Heart left ventricle (tissue), 16 donors: ENCODE measurements at regions of chr7 and their contacts with region 1.

Region 1: GRCh38 chr7:139995017-139995931 is 67.5 kb downstream of the PARP12 start:
- DNase-seq: peak in 4 of 5 donors; percentile 46 to 62 (median 54)
- ATAC-seq: peak; percentile 84 to 90 (median 86)
- H3K4me3 ChIP-seq: no peak overlapping the region
- H3K27ac ChIP-seq: no peak overlapping the region
- H3K4me1 ChIP-seq: peaks cover 0 to 9% (median 0%) of the 10 kb centered on the region in 12 donors
- H3K27me3 ChIP-seq: no peaks in the 10 kb centered on the region
- CTCF ChIP-seq: no peak
- POLR2A ChIP-seq: no peak

Region 2: GRCh38 chr7:139811066-139811465 is 184.2 kb before region 1 on chr7:
- intact Hi-C with region 1: loop called in 1 of 10 experiments (anchors 10 kb)
- DNase-seq: no peak
- ATAC-seq: no peak
- H3K4me3 ChIP-seq: no peak overlapping the region
- H3K27ac ChIP-seq: no peak overlapping the region
- H3K4me1 ChIP-seq: no peaks in the 10 kb centered on the region
- H3K27me3 ChIP-seq: no peaks in the 10 kb centered on the region
- CTCF ChIP-seq: no peak
- POLR2A ChIP-seq: no peak

Region 3: GRCh38 chr7:139897431-139898050 is 97.7 kb before region 1 on chr7:
- intact Hi-C with region 1: no loop called
- DNase-seq: no peak
- ATAC-seq: peak in 1 of 4 donors; percentile 9
- H3K4me3 ChIP-seq: no peak overlapping the region
- H3K27ac ChIP-seq: no peak overlapping the region
- H3K4me1 ChIP-seq: peaks cover 0 to 52% (median 0%) of the 10 kb centered on the region in 12 donors
- H3K27me3 ChIP-seq: no peaks in the 10 kb centered on the region
- CTCF ChIP-seq: no peak
- POLR2A ChIP-seq: no peak